ENCODE measurements at regions of chr6 and their contacts with region 1.

Region 1: GRCh38 chr6:42819803-42820511 is 38.1 kb downstream of the BICRAL start:
- DNase-seq: no peak
- H3K4me3 Mint-ChIP-seq: no peak overlapping the region
- H3K27ac Mint-ChIP-seq: no peak overlapping the region
- H3K4me1 Mint-ChIP-seq: peaks cover 24% of the 10 kb centered on the region
- H3K27me3 Mint-ChIP-seq: no peaks in the 10 kb centered on the region

Region 2: GRCh38 chr6:42782622-42783176 is 37.3 kb before region 1 on chr6:
- CTCF ChIA-PET with region 1: no interaction called
- POLR2A ChIA-PET with region 1: interaction called, 3 read pairs
- intact Hi-C with region 1: loop called (anchors 5 kb)
- DNase-seq: peak; percentile 80
- H3K4me3 Mint-ChIP-seq: peak overlapping the region; percentile 81
- H3K27ac Mint-ChIP-seq: peak overlapping the region; percentile 95
- H3K4me1 Mint-ChIP-seq: peaks cover 26% of the 10 kb centered on the region
- H3K27me3 Mint-ChIP-seq: no peaks in the 10 kb centered on the region

Region 3: GRCh38 chr6:42860481-42860880 is 40.5 kb after region 1 on chr6:
- CTCF ChIA-PET with region 1: no interaction called
- POLR2A ChIA-PET with region 1: no interaction called
- intact Hi-C with region 1: no loop called
- DNase-seq: no peak
- H3K4me3 Mint-ChIP-seq: no peak overlapping the region
- H3K27ac Mint-ChIP-seq: no peak overlapping the region
- H3K4me1 Mint-ChIP-seq: no peaks in the 10 kb centered on the region
- H3K27me3 Mint-ChIP-seq: no peaks in the 10 kb centered on the region

Measured in activated CD4-positive, alpha-beta memory T cell treated with anti-CD3 and anti-CD28 coated beads for 36 hours (primary cell).